Natural killer cell (primary cell): ENCODE measurements at regions of chr19 and their contacts with region 1.

Region 1: GRCh38 chr19:43595999-43596841 is at the starts of genes IRGQ and ZNF576:
- DNase-seq: peak; percentile 100
- ATAC-seq: peak; percentile 74 to 88 (median 79)
- H3K4me3 ChIP-seq: peak within 1 kb of the TSS; percentile 64
- H3K4me3 Mint-ChIP-seq: peak within 1 kb of the TSS; percentile 97
- H3K27ac ChIP-seq: peak within 1 kb of the TSS; percentile 89
- H3K27ac Mint-ChIP-seq: peak within 1 kb of the TSS; percentile 98 to 100
- H3K4me1 ChIP-seq: peaks cover 35% of the 10 kb centered on the region
- H3K4me1 Mint-ChIP-seq: peaks cover 44 to 47% of the 10 kb centered on the region in 2 donors
- H3K27me3 ChIP-seq: no peaks in the 10 kb centered on the region
- H3K27me3 Mint-ChIP-seq: no peaks in the 10 kb centered on the region
- CTCF ChIP-seq: no peak
- total RNA-seq, gene IRGQ: 28.5 to 43.7 (median 32.2) TPM
- total RNA-seq, gene ZNF576: 4.0 to 10.4 (median 5.8) TPM

Region 2: GRCh38 chr19:43446746-43447489 is 149.3 kb before region 1 on chr19:
- intact Hi-C with region 1: loop called (anchors 5 kb)
- DNase-seq: peak; percentile 72 to 92
- ATAC-seq: peak; percentile 82 to 97 (median 96)
- H3K4me3 ChIP-seq: no peak overlapping the region
- H3K4me3 Mint-ChIP-seq: no peak overlapping the region
- H3K27ac ChIP-seq: no peak overlapping the region
- H3K27ac Mint-ChIP-seq: peak overlapping the region; percentile 70 to 75
- H3K4me1 ChIP-seq: peaks cover 3% of the 10 kb centered on the region
- H3K4me1 Mint-ChIP-seq: peaks cover 8 to 11% of the 10 kb centered on the region in 2 donors
- H3K27me3 ChIP-seq: no peaks in the 10 kb centered on the region
- H3K27me3 Mint-ChIP-seq: no peaks in the 10 kb centered on the region
- CTCF ChIP-seq: peak; percentile 96

Region 3: GRCh38 chr19:43555185-43555770 is 40.9 kb before region 1 on chr19:
- intact Hi-C with region 1: loop called (anchors 1 kb)
- DNase-seq: peak; percentile 75 to 92
- ATAC-seq: peak; percentile 95 to 100 (median 100)
- H3K4me3 ChIP-seq: no peak overlapping the region
- H3K4me3 Mint-ChIP-seq: no peak overlapping the region
- H3K27ac ChIP-seq: no peak overlapping the region
- H3K27ac Mint-ChIP-seq: peak overlapping the region; percentile 41 to 63
- H3K4me1 ChIP-seq: peaks cover 7% of the 10 kb centered on the region
- H3K4me1 Mint-ChIP-seq: peaks cover 9 to 11% of the 10 kb centered on the region in 2 donors
- H3K27me3 ChIP-seq: no peaks in the 10 kb centered on the region
- H3K27me3 Mint-ChIP-seq: no peaks in the 10 kb centered on the region
- CTCF ChIP-seq: peak; percentile 74

Region 4: GRCh38 chr19:43575156-43575950 is 20.9 kb before region 1 on chr19 and contains the starts of genes PINLYP and XRCC1:
- intact Hi-C with region 1: loop called (anchors 1 kb)
- DNase-seq: peak; percentile 92 to 100
- ATAC-seq: peak; percentile 97 to 99 (median 98)
- H3K4me3 ChIP-seq: peak within 1 kb of the TSS; percentile 75
- H3K4me3 Mint-ChIP-seq: peak within 1 kb of the TSS; percentile 96
- H3K27ac ChIP-seq: peak within 1 kb of the TSS; percentile 84
- H3K27ac Mint-ChIP-seq: peak within 1 kb of the TSS; percentile 97 to 100
- H3K4me1 ChIP-seq: peaks cover 27% of the 10 kb centered on the region
- H3K4me1 Mint-ChIP-seq: peaks cover 36 to 44% of the 10 kb centered on the region in 2 donors
- H3K27me3 ChIP-seq: no peaks in the 10 kb centered on the region
- H3K27me3 Mint-ChIP-seq: peaks cover 0 to 6% of the 10 kb centered on the region in 2 donors
- CTCF ChIP-seq: no peak
- total RNA-seq, gene PINLYP: 1.7 to 3.0 (median 2.4) TPM
- total RNA-seq, gene XRCC1: 33.2 to 43.9 (median 40.7) TPM

Region 5: GRCh38 chr19:43668406-43669158 is 72.4 kb after region 1 on chr19:
- intact Hi-C with region 1: loop called (anchors 1 kb)
- DNase-seq: peak; percentile 87 to 97
- ATAC-seq: peak; percentile 86 to 95 (median 86)
- H3K4me3 ChIP-seq: peak overlapping the region; percentile 71
- H3K4me3 Mint-ChIP-seq: peak overlapping the region; percentile 94
- H3K27ac ChIP-seq: peak overlapping the region; percentile 48
- H3K27ac Mint-ChIP-seq: peak overlapping the region; percentile 68 to 84
- H3K4me1 ChIP-seq: peaks cover 47% of the 10 kb centered on the region
- H3K4me1 Mint-ChIP-seq: peaks cover 44 to 47% of the 10 kb centered on the region in 2 donors
- H3K27me3 ChIP-seq: peaks cover 3% of the 10 kb centered on the region
- H3K27me3 Mint-ChIP-seq: peaks cover 0 to 7% of the 10 kb centered on the region in 2 donors
- CTCF ChIP-seq: no peak

Region 6: DNA sequence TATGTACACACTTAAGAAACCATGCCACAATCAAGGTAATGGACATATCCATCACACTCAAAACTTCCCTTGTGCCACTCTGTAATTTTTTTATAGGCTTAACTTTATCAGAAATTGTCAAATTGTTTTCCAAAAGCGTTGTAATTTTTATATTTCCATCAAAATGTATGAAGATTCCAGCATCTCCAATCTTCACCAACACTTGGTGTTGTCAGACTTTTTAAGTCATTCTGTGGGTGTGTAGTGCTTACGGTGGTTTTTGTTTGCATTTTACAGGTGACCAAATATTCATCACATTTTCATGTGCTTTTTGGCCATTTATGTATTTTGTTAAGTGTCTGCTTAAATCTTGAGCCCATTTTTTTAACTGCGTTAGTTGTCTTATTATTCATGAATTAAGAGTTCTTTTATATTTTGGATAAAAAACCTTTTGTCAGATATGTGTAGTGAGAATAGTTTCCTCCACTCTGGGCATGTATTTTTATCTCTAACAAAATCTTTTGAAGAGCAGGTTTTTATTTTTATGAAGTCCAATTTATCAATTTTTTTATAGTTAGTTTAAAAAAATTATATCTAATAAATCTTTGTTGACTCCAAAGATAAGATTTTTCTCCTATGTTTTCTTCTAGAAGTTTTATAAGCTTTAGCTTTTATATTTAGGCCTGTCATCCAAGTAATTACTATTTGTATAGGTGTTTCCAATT is 343.5 kb after region 1 on chr19:
- intact Hi-C with region 1: no loop called
- DNase-seq: no peak
- ATAC-seq: no peak
- H3K4me3 ChIP-seq: no peak overlapping the region
- H3K4me3 Mint-ChIP-seq: no peak overlapping the region
- H3K27ac ChIP-seq: no peak overlapping the region
- H3K27ac Mint-ChIP-seq: no peak overlapping the region
- H3K4me1 ChIP-seq: peaks cover 5% of the 10 kb centered on the region
- H3K4me1 Mint-ChIP-seq: peaks cover 7% of the 10 kb centered on the region in 2 donors
- H3K27me3 ChIP-seq: peaks cover 6% of the 10 kb centered on the region
- H3K27me3 Mint-ChIP-seq: peaks cover 41 to 50% of the 10 kb centered on the region in 2 donors
- CTCF ChIP-seq: no peak